B cell (primary cell): ENCODE measurements at regions of chr6 and their contacts with region 1.

Region 1: GRCh38 chr6:30541515-30542403 is 14.5 kb downstream of the GNL1 start:
- DNase-seq: peak; percentile 92
- ATAC-seq: peak; percentile 80
- H3K4me3 ChIP-seq: peak overlapping the region; percentile 44 to 73 (median 63)
- H3K4me3 Mint-ChIP-seq: peak overlapping the region; percentile 88
- H3K27ac ChIP-seq: peak overlapping the region; percentile 71 to 89
- H3K27ac Mint-ChIP-seq: peak overlapping the region; percentile 87
- H3K4me1 ChIP-seq: peaks cover 18 to 29% of the 10 kb centered on the region in 2 donors
- H3K4me1 Mint-ChIP-seq: peaks cover 30% of the 10 kb centered on the region
- H3K27me3 ChIP-seq: no peaks in the 10 kb centered on the region
- H3K27me3 Mint-ChIP-seq: no peaks in the 10 kb centered on the region
- CTCF ChIP-seq: peak; percentile 100

Region 2: DNA sequence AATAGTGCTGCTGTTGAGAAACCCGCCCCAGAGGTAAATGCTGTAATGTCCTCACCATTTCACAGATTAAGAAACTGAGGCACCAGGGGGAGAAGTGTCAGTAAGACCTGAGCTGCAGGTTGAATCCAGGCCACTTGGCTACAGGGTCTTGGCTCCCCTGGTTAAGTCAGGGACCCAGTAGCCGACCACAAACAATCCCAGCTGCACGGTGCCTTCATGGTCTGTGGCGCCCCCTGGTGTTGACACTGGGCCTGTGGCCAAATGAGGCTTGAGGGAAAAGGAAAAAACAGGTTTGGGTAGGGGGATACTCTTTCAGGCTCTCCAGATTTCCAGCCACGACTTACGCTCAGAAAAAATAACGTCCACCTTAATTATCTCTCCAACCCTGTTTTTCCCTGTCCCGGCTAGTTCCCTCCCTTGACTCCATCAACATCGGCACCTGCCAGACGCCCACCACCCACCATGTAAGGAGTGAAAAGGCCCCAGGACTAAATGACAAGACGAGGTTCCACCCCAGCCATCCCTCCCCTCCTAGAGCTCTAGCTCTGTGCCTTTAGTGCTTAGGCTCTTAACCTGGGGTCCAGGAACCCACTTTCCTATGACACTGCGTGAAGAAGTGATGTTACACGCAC is 528.4 kb before region 1 on chr6:
- CTCF ChIA-PET with region 1: no interaction called
- POLR2A ChIA-PET with region 1: no interaction called
- intact Hi-C with region 1: no loop called
- DNase-seq: peak; percentile 63
- ATAC-seq: peak; percentile 43
- H3K4me3 ChIP-seq: no peak overlapping the region
- H3K4me3 Mint-ChIP-seq: no peak overlapping the region
- H3K27ac ChIP-seq: no peak overlapping the region
- H3K27ac Mint-ChIP-seq: no peak overlapping the region
- H3K4me1 ChIP-seq: peaks cover 0 to 2% of the 10 kb centered on the region in 2 donors
- H3K4me1 Mint-ChIP-seq: no peaks in the 10 kb centered on the region
- H3K27me3 ChIP-seq: peaks cover 0 to 4% (median 0%) of the 10 kb centered on the region in 4 experiments
- H3K27me3 Mint-ChIP-seq: peaks cover 3% of the 10 kb centered on the region
- CTCF ChIP-seq: peak; percentile 79

Region 3: GRCh38 chr6:30259140-30260035 is 282.4 kb before region 1 on chr6:
- CTCF ChIA-PET with region 1: no interaction called
- POLR2A ChIA-PET with region 1: no interaction called
- intact Hi-C with region 1: no loop called
- DNase-seq: peak; percentile 94
- ATAC-seq: peak; percentile 96
- H3K4me3 ChIP-seq: peak overlapping the region; percentile 25 to 100 (median 84)
- H3K4me3 Mint-ChIP-seq: peak overlapping the region; percentile 99
- H3K27ac ChIP-seq: peak overlapping the region; percentile 93 to 98
- H3K27ac Mint-ChIP-seq: peak overlapping the region; percentile 98
- H3K4me1 ChIP-seq: peaks cover 19 to 27% of the 10 kb centered on the region in 2 donors
- H3K4me1 Mint-ChIP-seq: peaks cover 32% of the 10 kb centered on the region
- H3K27me3 ChIP-seq: no peaks in the 10 kb centered on the region
- H3K27me3 Mint-ChIP-seq: no peaks in the 10 kb centered on the region
- CTCF ChIP-seq: peak; percentile 41

Region 4: GRCh38 chr6:30463651-30464618 is 77.8 kb before region 1 on chr6:
- CTCF ChIA-PET with region 1: interaction called, 13 read pairs
- POLR2A ChIA-PET with region 1: no interaction called
- intact Hi-C with region 1: no loop called
- DNase-seq: peak; percentile 71
- ATAC-seq: peak; percentile 58
- H3K4me3 ChIP-seq: peak overlapping the region in 4 of 5 experiments; percentile 8 to 41 (median 30)
- H3K4me3 Mint-ChIP-seq: peak overlapping the region; percentile 65
- H3K27ac ChIP-seq: no peak overlapping the region
- H3K27ac Mint-ChIP-seq: no peak overlapping the region
- H3K4me1 ChIP-seq: peaks cover 42% of the 10 kb centered on the region in 2 donors
- H3K4me1 Mint-ChIP-seq: peaks cover 43% of the 10 kb centered on the region
- H3K27me3 ChIP-seq: peaks cover 0 to 90% (median 77%) of the 10 kb centered on the region in 4 experiments
- H3K27me3 Mint-ChIP-seq: peaks cover 74% of the 10 kb centered on the region
- CTCF ChIP-seq: no peak

Region 5: GRCh38 chr6:30508890-30509736 is 32.6 kb before region 1 on chr6:
- CTCF ChIA-PET with region 1: interaction called, 82 read pairs
- POLR2A ChIA-PET with region 1: interaction called, 4 read pairs
- intact Hi-C with region 1: no loop called
- DNase-seq: peak; percentile 84
- ATAC-seq: peak; percentile 62
- H3K4me3 ChIP-seq: peak overlapping the region; percentile 20 to 74 (median 46)
- H3K4me3 Mint-ChIP-seq: peak overlapping the region; percentile 68
- H3K27ac ChIP-seq: peak overlapping the region; percentile 73 to 74
- H3K27ac Mint-ChIP-seq: peak overlapping the region; percentile 84
- H3K4me1 ChIP-seq: peaks cover 76 to 83% of the 10 kb centered on the region in 2 donors
- H3K4me1 Mint-ChIP-seq: peaks cover 67% of the 10 kb centered on the region
- H3K27me3 ChIP-seq: no peaks in the 10 kb centered on the region
- H3K27me3 Mint-ChIP-seq: no peaks in the 10 kb centered on the region
- CTCF ChIP-seq: no peak

Region 6: GRCh38 chr6:30571075-30571768 is 29.5 kb after region 1 on chr6 and contains the start of gene ABCF1:
- CTCF ChIA-PET with region 1: interaction called, 22 read pairs
- POLR2A ChIA-PET with region 1: interaction called, 6 read pairs
- intact Hi-C with region 1: no loop called
- DNase-seq: peak; percentile 99
- ATAC-seq: peak; percentile 98
- H3K4me3 ChIP-seq: peak within 1 kb of the TSS; percentile 69 to 93 (median 87)
- H3K4me3 Mint-ChIP-seq: peak within 1 kb of the TSS; percentile 96
- H3K27ac ChIP-seq: peak within 1 kb of the TSS; percentile 82 to 92
- H3K27ac Mint-ChIP-seq: peak within 1 kb of the TSS; percentile 93
- H3K4me1 ChIP-seq: peaks cover 25 to 32% of the 10 kb centered on the region in 2 donors
- H3K4me1 Mint-ChIP-seq: peaks cover 54% of the 10 kb centered on the region
- H3K27me3 ChIP-seq: no peaks in the 10 kb centered on the region
- H3K27me3 Mint-ChIP-seq: no peaks in the 10 kb centered on the region
- CTCF ChIP-seq: no peak
- total RNA-seq, gene ABCF1: 60.9 and 63.7 TPM in 2 replicates

Region 7: DNA sequence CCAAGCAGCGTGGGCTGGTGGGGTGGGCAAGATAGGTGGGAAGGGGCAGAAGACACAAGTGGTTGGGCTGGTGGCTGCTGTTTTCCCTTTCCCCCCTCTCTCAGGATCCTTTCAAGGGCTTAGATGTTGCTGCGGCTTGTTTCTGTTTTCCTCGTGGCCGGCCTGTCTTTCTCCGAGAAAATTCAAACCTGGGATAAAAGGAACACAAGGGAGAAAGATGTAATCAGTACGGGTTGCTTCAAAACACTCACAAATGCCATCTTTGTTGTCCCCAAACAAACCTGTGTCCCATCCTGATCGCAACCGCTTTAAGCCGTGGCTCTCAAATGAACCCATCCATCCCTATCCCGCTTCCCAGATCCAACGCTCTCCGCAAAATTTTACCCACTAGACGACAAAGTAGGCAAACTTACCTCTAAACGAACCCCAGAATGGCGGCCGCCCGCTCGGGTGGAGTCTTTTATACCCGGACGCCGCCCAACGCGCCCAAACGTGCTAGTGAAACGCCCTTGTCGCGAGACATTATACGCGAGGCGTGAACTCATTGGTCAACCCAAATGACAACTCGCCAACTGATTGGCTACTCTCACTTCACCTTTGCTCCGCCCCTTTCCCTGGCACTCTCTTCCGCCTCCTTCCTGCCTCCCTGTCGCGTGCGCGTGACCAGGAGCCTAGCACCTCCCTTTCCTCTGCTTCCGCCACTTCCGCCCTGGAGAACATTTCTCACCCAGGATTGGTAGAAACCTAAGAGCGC is 75.2 kb after region 1 on chr6 and contains the start of gene PPP1R10:
- CTCF ChIA-PET with region 1: interaction called, 41 read pairs
- POLR2A ChIA-PET with region 1: interaction called, 4 read pairs
- intact Hi-C with region 1: loop called (anchors 2 kb)
- DNase-seq: peak; percentile 100
- ATAC-seq: peak; percentile 77
- H3K4me3 ChIP-seq: peak within 1 kb of the TSS; percentile 93 to 100 (median 98)
- H3K4me3 Mint-ChIP-seq: peak within 1 kb of the TSS; percentile 92
- H3K27ac ChIP-seq: peak within 1 kb of the TSS; percentile 99
- H3K27ac Mint-ChIP-seq: peak within 1 kb of the TSS; percentile 100
- H3K4me1 ChIP-seq: peaks cover 33 to 36% of the 10 kb centered on the region in 2 donors
- H3K4me1 Mint-ChIP-seq: peaks cover 38% of the 10 kb centered on the region
- H3K27me3 ChIP-seq: no peaks in the 10 kb centered on the region
- H3K27me3 Mint-ChIP-seq: no peaks in the 10 kb centered on the region
- CTCF ChIP-seq: no peak
- total RNA-seq, gene PPP1R10: 157 and 177 TPM in 2 replicates

Region 8: GRCh38 chr6:30730601-30731435 is 189.1 kb after region 1 on chr6:
- CTCF ChIA-PET with region 1: interaction called, 116 read pairs
- POLR2A ChIA-PET with region 1: interaction called, 4 read pairs
- intact Hi-C with region 1: loop called (anchors 2 kb)
- DNase-seq: peak; percentile 86
- ATAC-seq: peak; percentile 89
- H3K4me3 ChIP-seq: peak overlapping the region in 3 of 5 experiments; percentile 5 to 29 (median 25)
- H3K4me3 Mint-ChIP-seq: peak overlapping the region; percentile 40
- H3K27ac ChIP-seq: no peak overlapping the region
- H3K27ac Mint-ChIP-seq: peak overlapping the region; percentile 42
- H3K4me1 ChIP-seq: peaks cover 22 to 23% of the 10 kb centered on the region in 2 donors
- H3K4me1 Mint-ChIP-seq: peaks cover 25% of the 10 kb centered on the region
- H3K27me3 ChIP-seq: no peaks in the 10 kb centered on the region
- H3K27me3 Mint-ChIP-seq: no peaks in the 10 kb centered on the region
- CTCF ChIP-seq: peak; percentile 77